PC-9 (cell line): ENCODE measurements at regions of chr12 and their contacts with region 1.

Region 1: GRCh38 chr12:132687208-132688164 is at the starts of genes POLE and PXMP2:
- DNase-seq: peak; percentile 84 to 95
- H3K4me3 ChIP-seq: peak within 1 kb of the TSS; percentile 81
- H3K27ac ChIP-seq: no peak within 1 kb of the TSS
- H3K4me1 ChIP-seq: peaks cover 13% of the 10 kb centered on the region
- H3K27me3 ChIP-seq: no peaks in the 10 kb centered on the region
- CTCF ChIP-seq: no peak
- total RNA-seq, gene POLE: 62.9 and 69.9 TPM in 2 replicates
- total RNA-seq, gene PXMP2: 38.6 and 43.9 TPM in 2 replicates

Region 2: DNA sequence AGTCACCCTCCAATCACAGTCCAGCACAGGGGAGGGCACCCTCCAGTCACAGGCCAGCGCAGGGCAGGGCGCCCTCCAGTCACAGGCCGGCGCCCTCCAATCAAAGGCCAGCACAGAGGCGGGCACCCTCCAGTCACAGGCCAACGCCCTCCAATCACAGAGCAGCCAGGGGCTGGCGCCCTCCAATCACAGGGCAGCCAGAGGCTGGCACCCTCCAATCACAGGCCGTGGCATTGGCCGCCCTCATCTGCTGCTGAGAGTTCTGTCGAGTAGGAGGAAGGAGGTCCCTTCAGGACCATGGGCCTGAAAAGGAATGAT is 570.0 kb before region 1 on chr12:
- CTCF ChIA-PET with region 1: no interaction called
- POLR2A ChIA-PET with region 1: no interaction called
- intact Hi-C with region 1: no loop called
- DNase-seq: no peak
- H3K4me3 ChIP-seq: no peak overlapping the region
- H3K27ac ChIP-seq: no peak overlapping the region
- H3K4me1 ChIP-seq: no peaks in the 10 kb centered on the region
- H3K27me3 ChIP-seq: no peaks in the 10 kb centered on the region
- CTCF ChIP-seq: no peak

Region 3: DNA sequence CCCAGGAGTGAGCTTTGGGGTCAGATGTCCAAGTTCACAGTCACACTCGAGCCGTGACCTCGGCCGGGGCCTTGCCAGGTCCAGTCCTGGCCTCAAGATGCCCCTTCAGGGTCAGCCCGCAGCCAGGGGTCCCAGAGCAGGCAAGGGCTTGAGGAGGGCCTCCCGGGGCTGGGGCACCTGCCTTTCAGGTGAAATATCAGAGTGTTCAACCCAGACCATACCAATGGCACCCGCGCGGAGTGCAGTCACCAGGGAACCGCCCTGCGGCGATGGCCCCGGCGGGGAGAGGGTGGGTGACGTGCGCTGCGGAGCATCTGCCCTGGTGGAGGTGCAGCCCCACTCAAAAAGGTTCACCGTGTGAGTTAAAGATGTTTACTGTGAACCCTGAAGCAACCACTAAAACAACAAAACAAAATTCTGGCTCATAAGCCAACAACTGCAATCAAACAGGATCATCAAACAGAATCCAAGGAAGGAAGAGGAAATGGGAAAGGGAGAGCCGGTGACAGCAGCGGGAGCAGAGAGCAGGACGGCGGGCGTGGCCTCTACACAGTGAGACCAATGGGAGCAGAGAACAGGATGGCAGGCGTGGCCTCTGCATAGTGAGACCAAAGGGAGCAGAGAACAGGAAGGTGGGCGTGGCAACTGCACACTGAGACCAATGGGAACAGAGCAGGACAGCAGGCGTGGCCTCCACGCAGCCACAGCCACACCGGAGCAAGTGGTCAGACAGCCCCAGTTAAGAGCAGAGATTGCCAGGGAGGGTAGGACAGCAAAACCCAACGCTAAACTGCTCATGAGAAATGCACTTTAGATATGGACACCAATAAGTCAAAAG is 93.7 kb before region 1 on chr12:
- CTCF ChIA-PET with region 1: no interaction called
- POLR2A ChIA-PET with region 1: no interaction called
- intact Hi-C with region 1: no loop called
- DNase-seq: peak; percentile 82 to 86
- H3K4me3 ChIP-seq: no peak overlapping the region
- H3K27ac ChIP-seq: no peak overlapping the region
- H3K4me1 ChIP-seq: no peaks in the 10 kb centered on the region; the same call in 1 of the 2 replicates
- H3K27me3 ChIP-seq: peaks cover 27% of the 10 kb centered on the region
- CTCF ChIP-seq: no peak

Region 4: DNA sequence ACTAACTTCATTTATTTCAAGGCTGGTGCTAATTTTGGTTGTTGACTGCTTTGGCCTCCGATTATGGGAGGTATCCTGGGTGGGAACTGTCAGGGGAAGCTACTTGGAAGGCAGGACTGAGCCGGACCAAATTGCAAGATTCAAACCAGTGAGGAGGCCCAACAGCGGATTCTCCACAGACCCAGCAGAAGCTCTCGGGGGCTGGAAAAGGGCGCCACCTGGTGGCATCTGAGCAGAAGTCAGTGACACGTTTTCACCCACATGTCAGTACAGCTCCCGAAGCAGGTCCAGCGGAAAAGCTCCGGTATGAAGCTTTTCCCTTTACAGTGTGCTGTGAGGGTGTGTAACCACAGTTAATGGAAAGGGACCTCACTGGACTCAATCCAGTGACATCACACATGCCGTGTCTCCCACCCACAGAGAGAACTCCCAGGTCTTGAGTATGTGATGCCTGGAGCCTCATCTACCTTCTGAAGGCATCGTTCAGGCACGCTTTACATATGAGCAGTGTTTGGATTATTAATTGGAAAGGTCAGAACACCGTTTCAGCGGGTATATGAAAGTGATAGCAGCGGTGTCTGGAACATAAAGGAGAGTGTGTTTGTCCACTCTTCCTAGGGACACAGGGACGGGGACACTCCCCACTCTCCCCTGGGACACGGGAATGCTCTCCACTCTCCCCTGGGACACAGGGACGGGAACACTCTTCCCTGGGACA is 72.5 kb before region 1 on chr12:
- CTCF ChIA-PET with region 1: no interaction called
- POLR2A ChIA-PET with region 1: no interaction called
- intact Hi-C with region 1: no loop called
- DNase-seq: peak; percentile 63 to 72
- H3K4me3 ChIP-seq: no peak overlapping the region
- H3K27ac ChIP-seq: no peak overlapping the region
- H3K4me1 ChIP-seq: no peaks in the 10 kb centered on the region
- H3K27me3 ChIP-seq: peaks cover 45% of the 10 kb centered on the region
- CTCF ChIP-seq: peak; percentile 93

Region 5: DNA sequence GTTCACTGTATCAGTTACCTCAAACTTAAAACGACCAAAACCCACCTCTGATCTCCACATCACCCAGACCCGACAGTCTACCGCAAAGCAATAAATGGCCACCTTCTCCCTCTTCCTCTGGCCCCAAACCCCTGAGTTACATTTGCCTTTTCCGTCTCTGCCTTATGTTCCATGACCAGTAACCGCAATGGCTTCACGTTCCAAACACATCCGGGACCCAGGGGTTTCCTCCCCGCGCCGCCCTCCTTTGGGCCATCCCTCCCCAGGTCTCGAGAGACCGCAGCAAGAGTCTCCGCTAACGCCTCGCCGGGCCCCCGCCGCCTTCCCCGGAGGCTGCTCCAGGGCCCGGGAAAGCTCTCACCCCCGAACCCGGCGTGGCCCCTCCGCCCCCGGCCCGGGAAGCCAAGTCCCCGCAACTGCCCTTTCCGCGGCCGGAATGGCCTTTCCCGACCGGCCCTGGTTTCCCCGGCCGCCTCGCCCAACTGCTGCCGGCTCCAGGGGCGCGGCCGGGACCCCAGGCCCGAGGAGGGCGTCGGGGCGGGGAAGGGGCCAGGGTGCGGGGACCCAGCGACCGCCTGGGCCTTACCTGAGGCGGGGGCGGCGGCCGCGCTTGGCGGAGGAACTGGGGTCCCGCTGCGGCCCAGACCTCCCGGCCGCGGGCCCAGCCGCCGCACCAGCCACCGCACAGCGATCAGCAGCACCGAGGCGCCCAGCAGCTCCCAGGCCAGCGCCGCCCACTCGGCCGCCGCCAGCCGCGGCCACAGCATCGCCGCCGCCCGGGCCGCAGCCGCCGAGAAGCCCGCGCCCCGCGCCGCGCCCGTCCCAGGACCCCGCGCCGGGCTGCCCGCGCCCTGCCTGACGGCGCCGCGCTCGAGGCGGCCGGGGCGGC is 73.8 kb after region 1 on chr12 and contains the start of gene ANKLE2:
- CTCF ChIA-PET with region 1: no interaction called
- POLR2A ChIA-PET with region 1: no interaction called
- intact Hi-C with region 1: loop called (anchors 2 kb)
- DNase-seq: peak in 1 of 2 experiments; percentile 32
- H3K4me3 ChIP-seq: peak within 1 kb of the TSS; percentile 99
- H3K27ac ChIP-seq: peak within 1 kb of the TSS; percentile 98
- H3K4me1 ChIP-seq: peaks cover 12% of the 10 kb centered on the region
- H3K27me3 ChIP-seq: no peaks in the 10 kb centered on the region
- CTCF ChIP-seq: no peak
- total RNA-seq, gene ANKLE2: 102 and 123 TPM in 2 replicates

Region 6: GRCh38 chr12:133106253-133106652 is 418.8 kb after region 1 on chr12:
- CTCF ChIA-PET with region 1: no interaction called
- POLR2A ChIA-PET with region 1: interaction called, 11 read pairs
- intact Hi-C with region 1: no loop called
- DNase-seq: no peak
- H3K4me3 ChIP-seq: no peak overlapping the region
- H3K27ac ChIP-seq: no peak overlapping the region
- H3K4me1 ChIP-seq: no peaks in the 10 kb centered on the region
- H3K27me3 ChIP-seq: no peaks in the 10 kb centered on the region
- CTCF ChIP-seq: no peak